ENCODE measurements at regions of chr6 and their contacts with region 1.

Region 1: GRCh38 chr6:139588076-139588639 is 213.7 kb upstream of the CITED2 start:
- DNase-seq: peak; percentile 66
- H3K4me3 Mint-ChIP-seq: peak overlapping the region; percentile 59
- H3K27ac Mint-ChIP-seq: peak overlapping the region; percentile 91
- H3K4me1 Mint-ChIP-seq: peaks cover 56% of the 10 kb centered on the region
- H3K27me3 Mint-ChIP-seq: no peaks in the 10 kb centered on the region
- CTCF ChIP-seq: no peak

Region 2: DNA sequence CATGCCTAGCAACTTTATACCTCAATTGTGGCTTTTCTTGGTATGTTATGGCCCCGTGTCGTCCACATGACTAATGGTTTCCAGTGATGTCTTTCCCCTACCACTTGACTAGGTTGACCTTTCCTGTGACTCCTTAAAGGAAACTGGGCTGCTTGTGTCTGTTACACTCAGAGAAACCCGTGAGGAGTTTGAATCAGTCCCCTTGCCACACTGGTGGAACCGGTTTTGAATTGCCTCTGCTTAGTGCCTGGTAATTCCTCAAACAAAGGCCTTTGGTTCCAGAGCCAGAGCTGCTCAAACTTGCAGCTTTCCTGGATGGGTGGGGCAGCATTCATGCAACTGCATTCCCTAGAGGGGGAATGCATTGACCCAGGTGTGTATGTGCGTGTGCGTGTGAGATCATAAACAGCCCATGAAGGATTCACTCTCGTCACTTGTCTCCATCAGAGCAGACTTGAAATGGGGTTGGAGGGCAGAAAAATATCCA is 770.3 kb before region 1 on chr6:
- CTCF ChIA-PET with region 1: no interaction called
- intact Hi-C with region 1: loop called (anchors 10 kb)
- DNase-seq: peak; percentile 90
- H3K4me3 Mint-ChIP-seq: peak overlapping the region; percentile 17
- H3K27ac Mint-ChIP-seq: peak overlapping the region; percentile 94
- H3K4me1 Mint-ChIP-seq: peaks cover 28% of the 10 kb centered on the region
- H3K27me3 Mint-ChIP-seq: no peaks in the 10 kb centered on the region
- CTCF ChIP-seq: no peak

Region 3: GRCh38 chr6:139568956-139569548 is 19.1 kb before region 1 on chr6:
- CTCF ChIA-PET with region 1: no interaction called
- intact Hi-C with region 1: loop called (anchors 1 kb)
- DNase-seq: peak; percentile 8
- H3K4me3 Mint-ChIP-seq: peak overlapping the region; percentile 31
- H3K27ac Mint-ChIP-seq: peak overlapping the region; percentile 82
- H3K4me1 Mint-ChIP-seq: peaks cover 24% of the 10 kb centered on the region
- H3K27me3 Mint-ChIP-seq: no peaks in the 10 kb centered on the region
- CTCF ChIP-seq: no peak

Region 4: DNA sequence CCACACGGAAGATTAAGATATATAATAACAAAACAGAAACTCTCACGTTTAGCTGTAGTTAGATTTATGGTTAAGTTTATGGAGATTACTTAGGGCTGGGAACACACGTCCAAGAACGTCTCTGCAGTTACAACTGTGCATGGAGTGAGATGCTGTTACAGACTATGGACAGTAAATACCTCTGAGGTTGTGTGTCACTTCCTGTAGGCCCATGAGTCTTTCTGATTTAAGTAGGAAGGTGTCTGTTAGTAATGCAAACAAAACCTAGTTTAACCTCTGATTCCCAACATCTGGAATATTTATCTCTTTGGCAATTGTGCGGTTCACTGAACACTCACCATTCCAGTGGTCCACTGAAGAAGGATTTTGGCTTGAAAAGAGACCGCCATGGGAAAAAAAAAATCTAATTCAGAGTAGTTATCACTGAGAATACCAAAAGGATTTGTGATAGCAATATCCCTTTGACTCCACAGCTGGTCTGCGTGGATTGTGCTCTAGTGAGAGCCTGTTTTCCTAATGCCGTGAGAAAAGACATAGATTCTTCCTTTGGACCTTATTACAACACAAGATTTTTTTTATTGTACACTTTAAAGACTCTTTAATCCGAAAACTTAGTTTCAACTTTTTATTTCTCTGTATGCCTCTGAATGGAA is 264.5 kb after region 1 on chr6:
- CTCF ChIA-PET with region 1: no interaction called
- intact Hi-C with region 1: loop called (anchors 10 kb)
- DNase-seq: no peak
- H3K4me3 Mint-ChIP-seq: no peak overlapping the region
- H3K27ac Mint-ChIP-seq: no peak overlapping the region
- H3K4me1 Mint-ChIP-seq: peaks cover 36% of the 10 kb centered on the region
- H3K27me3 Mint-ChIP-seq: no peaks in the 10 kb centered on the region
- CTCF ChIP-seq: no peak

Region 5: DNA sequence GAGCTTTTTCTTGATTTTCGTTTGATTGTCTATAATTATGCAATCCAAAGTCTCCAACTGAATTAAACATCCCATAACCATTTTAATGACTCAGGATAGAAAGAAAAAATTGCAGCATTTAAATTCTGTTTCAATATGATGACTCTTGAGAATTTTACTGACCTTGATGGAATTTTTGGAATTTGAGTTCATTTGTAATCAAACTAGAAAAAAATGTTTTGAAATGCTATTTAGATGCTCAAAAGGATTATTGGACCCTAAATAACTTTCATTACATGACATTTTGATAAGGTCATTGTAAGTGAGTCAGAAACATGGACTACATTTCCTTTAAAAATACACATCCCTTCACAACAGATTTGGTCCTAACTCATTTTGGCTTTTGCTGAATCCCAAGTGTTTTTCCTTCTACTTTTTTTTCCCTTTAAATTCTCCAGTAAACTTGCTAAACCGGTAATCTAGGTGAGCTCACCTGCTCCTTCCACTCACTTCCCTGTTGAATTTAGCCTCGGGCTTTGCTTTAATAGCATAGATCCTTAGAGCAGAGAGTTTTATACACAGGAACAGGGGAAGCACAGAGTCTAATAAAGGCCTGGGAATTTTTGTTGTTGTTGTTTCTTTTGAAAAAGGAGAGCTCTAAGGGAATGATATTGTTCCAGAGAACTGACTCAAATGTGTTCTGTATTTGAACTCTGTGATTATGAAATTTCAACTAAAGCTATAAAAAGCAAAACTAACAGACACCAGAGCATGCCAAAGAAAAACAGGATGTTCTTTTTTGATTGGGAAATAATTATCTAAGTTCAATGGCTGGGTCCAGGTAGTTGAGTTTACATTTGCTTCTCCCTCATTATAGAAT is 874.5 kb after region 1 on chr6:
- CTCF ChIA-PET with region 1: no interaction called
- intact Hi-C with region 1: loop called (anchors 10 kb)
- DNase-seq: peak; percentile 10
- H3K4me3 Mint-ChIP-seq: peak overlapping the region; percentile 28
- H3K27ac Mint-ChIP-seq: peak overlapping the region; percentile 85
- H3K4me1 Mint-ChIP-seq: peaks cover 44% of the 10 kb centered on the region
- H3K27me3 Mint-ChIP-seq: no peaks in the 10 kb centered on the region
- CTCF ChIP-seq: no peak

Measured in Calu3 (cell line).